GM10248 (cell line): ENCODE measurements at regions of chr20 and their contacts with region 1.

Region 1: GRCh38 chr20:43749734-43750294 is 23.0 kb upstream of the GTSF1L start:
- DNase-seq: peak; percentile 84
- CTCF ChIP-seq: peak; percentile 99

Region 2: DNA sequence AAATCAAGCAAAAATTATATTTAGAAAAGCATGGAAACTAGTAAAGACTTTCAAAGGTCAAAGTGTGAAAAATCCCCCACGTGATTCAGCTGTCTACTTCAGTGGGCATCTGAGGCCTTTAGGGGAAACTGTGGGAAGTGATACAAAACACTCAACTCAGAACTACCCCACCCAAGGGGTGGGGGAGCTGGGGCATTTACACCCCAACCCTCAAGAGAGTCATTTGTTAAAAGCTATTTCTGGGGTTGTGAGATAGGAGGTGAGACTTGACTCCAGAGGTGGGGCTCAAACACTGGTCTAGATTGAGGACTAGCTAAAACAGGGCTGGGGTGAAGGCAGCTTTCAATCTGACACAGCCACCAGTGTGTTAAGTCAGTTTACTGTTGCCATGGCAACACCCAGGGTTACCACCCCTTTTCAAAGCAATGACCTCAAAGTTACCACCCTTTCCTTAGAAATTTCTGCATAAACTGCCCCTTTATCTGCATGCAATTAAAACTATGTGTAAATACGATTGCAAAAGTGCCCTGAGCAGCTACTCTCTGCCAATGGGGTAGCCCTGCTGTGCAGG is 13.1 kb before region 1 on chr20:
- CTCF ChIA-PET with region 1: interaction called, 62 read pairs
- POLR2A ChIA-PET with region 1: interaction called, 3 read pairs
- DNase-seq: peak; percentile 73
- CTCF ChIP-seq: no peak

Region 3: GRCh38 chr20:43942661-43943290 is 193.0 kb after region 1 on chr20:
- CTCF ChIA-PET with region 1: interaction called, 21 read pairs
- POLR2A ChIA-PET with region 1: no interaction called
- DNase-seq: peak; percentile 77
- CTCF ChIP-seq: no peak

Region 4: DNA sequence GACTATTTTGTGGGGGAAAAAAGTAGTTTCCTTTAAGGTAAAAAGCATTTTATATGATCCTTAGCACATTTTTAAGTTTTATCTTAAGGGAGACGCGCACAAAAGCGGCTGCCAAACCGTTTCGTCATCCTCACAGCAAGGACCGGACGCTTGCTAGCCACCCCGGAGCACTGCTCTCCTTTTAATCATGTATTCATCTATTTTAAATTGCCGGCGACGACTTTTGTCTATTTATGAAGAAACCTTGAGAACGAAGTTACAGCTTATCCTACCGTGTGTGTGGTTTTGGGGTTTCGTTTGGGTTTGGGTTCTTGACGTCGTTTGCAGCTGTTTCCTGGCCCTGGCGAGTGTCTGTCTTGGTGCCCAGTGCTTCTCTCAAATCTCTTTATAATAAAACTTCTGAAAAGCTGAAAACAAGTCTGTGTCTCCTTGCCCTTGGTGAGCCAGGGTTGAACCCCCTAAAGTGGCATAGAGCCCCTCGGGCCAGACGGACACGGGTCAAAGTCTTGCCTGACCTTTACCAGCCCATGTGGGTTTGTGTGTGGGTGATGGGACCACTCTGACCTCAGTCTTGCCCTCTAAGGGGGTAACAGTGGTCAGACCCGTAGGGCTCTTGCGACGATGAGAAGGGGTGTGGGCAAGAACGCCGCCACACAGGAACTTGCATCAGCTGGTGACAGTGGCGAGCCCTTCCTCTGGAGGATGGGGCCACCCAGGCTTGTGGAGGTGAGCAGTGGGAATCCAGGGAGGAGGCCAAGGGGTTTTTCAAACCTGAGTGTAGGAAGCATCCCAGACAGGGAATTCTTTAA is 319.6 kb after region 1 on chr20:
- CTCF ChIA-PET with region 1: interaction called, 13 read pairs
- POLR2A ChIA-PET with region 1: interaction called, 6 read pairs
- DNase-seq: peak; percentile 51
- CTCF ChIP-seq: no peak

Region 5: GRCh38 chr20:44092551-44093248 is 342.9 kb after region 1 on chr20:
- CTCF ChIA-PET with region 1: interaction called, 22 read pairs
- POLR2A ChIA-PET with region 1: no interaction called
- DNase-seq: no peak
- CTCF ChIP-seq: peak; percentile 45